Heart left ventricle (tissue), 16 donors: ENCODE measurements at regions of chr17 and their contacts with region 1.

Region 1: DNA sequence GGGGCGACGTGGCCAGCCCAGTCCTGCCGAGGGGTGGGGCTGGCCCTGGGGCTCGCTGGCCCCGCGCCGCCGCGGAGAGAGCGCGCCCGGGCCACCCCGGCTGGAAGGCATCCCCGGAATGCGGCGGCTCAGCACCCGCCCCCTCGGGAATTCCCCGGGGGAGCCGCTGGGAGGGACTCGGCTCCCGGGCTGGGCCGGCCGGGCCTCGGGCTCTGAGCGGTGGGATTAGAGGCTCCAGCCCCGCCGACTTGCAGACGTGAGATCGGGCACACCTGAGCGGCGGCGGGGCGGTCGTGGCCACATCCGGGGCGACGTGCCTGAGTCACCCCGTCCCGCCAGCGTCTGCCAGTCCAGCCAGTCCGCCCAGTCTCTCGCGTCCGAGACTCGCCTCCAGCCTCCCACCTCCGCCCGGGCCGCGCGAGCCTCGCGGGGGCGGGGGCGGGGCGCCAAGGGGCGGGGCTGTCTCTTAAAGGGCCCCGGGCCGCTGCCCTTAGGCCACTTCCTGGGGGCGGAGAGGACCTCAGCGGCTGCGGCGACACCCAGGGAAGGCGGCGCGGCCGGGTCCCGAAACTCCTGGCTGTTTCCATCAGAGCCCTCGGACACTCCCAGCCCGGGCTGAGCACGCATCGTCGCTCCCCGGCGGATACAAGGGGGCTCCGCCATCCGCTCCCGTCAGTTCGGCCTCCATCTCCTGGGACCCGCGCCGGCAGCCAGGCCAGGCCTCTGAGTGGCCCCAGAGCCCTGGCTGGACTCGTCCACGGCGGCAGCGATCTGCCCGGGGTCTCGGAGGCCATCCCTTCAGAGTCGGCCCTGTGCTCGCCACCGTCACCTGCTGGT is at the start of gene KCTD11:
- DNase-seq: peak; percentile 91 to 95 (median 95)
- ATAC-seq: peak; percentile 45 to 81 (median 72)
- H3K4me3 ChIP-seq: peak within 1 kb of the TSS; percentile 49 to 98 (median 87)
- H3K27ac ChIP-seq: peak within 1 kb of the TSS; percentile 95 to 100 (median 97)
- H3K4me1 ChIP-seq: peaks cover 0 to 67% (median 38%) of the 10 kb centered on the region in 12 donors
- H3K27me3 ChIP-seq: no peaks in the 10 kb centered on the region
- CTCF ChIP-seq: peak in 7 of 12 donors; percentile 31 to 67 (median 49)
- POLR2A ChIP-seq: peak in 1 of 2 donors; percentile 80
- total RNA-seq, gene KCTD11: 3.4 to 9.0 (median 5.9) TPM

Region 2: GRCh38 chr17:7280519-7281429 is 71.1 kb before region 1 on chr17:
- intact Hi-C with region 1: loop called in 8 of 10 experiments (anchors 2 to 10 kb)
- DNase-seq: peak; percentile 86 to 94 (median 90)
- ATAC-seq: peak; percentile 69 to 77 (median 72)
- H3K4me3 ChIP-seq: peak overlapping the region in 11 of 12 donors; percentile 26 to 76 (median 65)
- H3K27ac ChIP-seq: peak overlapping the region; percentile 90 to 99 (median 96)
- H3K4me1 ChIP-seq: peaks cover 4 to 49% (median 21%) of the 10 kb centered on the region in 12 donors
- H3K27me3 ChIP-seq: peaks cover 0 to 24% (median 3%) of the 10 kb centered on the region in 9 donors
- CTCF ChIP-seq: peak; percentile 84 to 97 (median 94)
- POLR2A ChIP-seq: no peak

Region 3: GRCh38 chr17:7304179-7304578 is 47.7 kb before region 1 on chr17:
- intact Hi-C with region 1: no loop called
- DNase-seq: no peak
- ATAC-seq: no peak
- H3K4me3 ChIP-seq: no peak overlapping the region
- H3K27ac ChIP-seq: no peak overlapping the region
- H3K4me1 ChIP-seq: peaks cover 0 to 17% (median 11%) of the 10 kb centered on the region in 12 donors
- H3K27me3 ChIP-seq: no peaks in the 10 kb centered on the region
- CTCF ChIP-seq: no peak
- POLR2A ChIP-seq: no peak

Region 4: GRCh38 chr17:7403977-7404736 is 52.3 kb after region 1 on chr17 and contains the start of gene TMEM256:
- intact Hi-C with region 1: loop called in 3 of 10 experiments (anchors 2 to 5 kb)
- DNase-seq: peak; percentile 99
- ATAC-seq: peak; percentile 93 to 97 (median 96)
- H3K4me3 ChIP-seq: peak within 1 kb of the TSS; percentile 49 to 88 (median 72)
- H3K27ac ChIP-seq: peak within 1 kb of the TSS; percentile 83 to 98 (median 92)
- H3K4me1 ChIP-seq: peaks cover 5 to 34% (median 17%) of the 10 kb centered on the region in 12 donors
- H3K27me3 ChIP-seq: peaks cover 0 to 5% (median 0%) of the 10 kb centered on the region in 9 donors
- CTCF ChIP-seq: no peak
- POLR2A ChIP-seq: peak; percentile 94 to 99
- total RNA-seq, gene TMEM256: 51.9 to 78.7 (median 69.5) TPM

Region 5: DNA sequence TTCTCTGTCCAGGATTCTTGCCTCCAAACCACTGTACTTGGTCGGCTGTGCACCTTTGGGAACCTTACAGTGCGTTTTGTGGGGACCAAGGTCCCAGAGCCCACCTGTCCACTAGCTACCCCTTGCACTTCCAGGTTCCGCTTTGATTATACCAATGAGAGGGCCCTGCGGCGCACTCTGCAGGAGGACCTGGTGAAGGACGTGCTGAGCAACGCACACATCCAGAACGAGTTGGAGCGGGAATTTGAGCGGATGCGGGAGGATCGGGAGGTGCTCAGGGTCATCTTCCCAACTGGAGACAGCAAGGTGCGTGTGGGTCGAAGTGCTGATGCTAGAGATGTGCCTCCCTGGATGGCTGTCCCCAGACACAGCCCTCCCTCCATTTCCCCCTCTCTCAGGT is 151.1 kb after region 1 on chr17:
- intact Hi-C with region 1: loop called in 1 of 10 experiments (anchors 10 kb)
- DNase-seq: no peak
- ATAC-seq: peak in 1 of 4 donors; percentile 33
- H3K4me3 ChIP-seq: no peak overlapping the region
- H3K27ac ChIP-seq: no peak overlapping the region
- H3K4me1 ChIP-seq: peaks cover 0 to 4% (median 0%) of the 10 kb centered on the region in 12 donors
- H3K27me3 ChIP-seq: no peaks in the 10 kb centered on the region
- CTCF ChIP-seq: peak in 4 of 12 donors; percentile 10 to 31 (median 16)
- POLR2A ChIP-seq: no peak

Region 6: GRCh38 chr17:7572588-7573323 is 220.9 kb after region 1 on chr17:
- intact Hi-C with region 1: loop called in 3 of 10 experiments (anchors 10 kb)
- DNase-seq: peak; percentile 99 to 100 (median 99)
- ATAC-seq: peak; percentile 92 to 96 (median 96)
- H3K4me3 ChIP-seq: peak overlapping the region; percentile 77 to 100 (median 100)
- H3K27ac ChIP-seq: peak overlapping the region; percentile 80 to 100 (median 98)
- H3K4me1 ChIP-seq: peaks cover 4 to 50% (median 32%) of the 10 kb centered on the region in 12 donors
- H3K27me3 ChIP-seq: no peaks in the 10 kb centered on the region
- CTCF ChIP-seq: no peak
- POLR2A ChIP-seq: peak; percentile 95 to 99